Activated T-helper 1 cell treated with anti-CD3 and anti-CD28 coated beads, Interleukin-12 subunit alpha, Interleukin-12 subunit beta, Interleukin-2, Interleukin-4 antibody, amounts not matched to agents 30 ng/mL and 10 ng/mL and 1 ng/mL, durations not matched to agents 14 hours and 24 hours and 36 hours (primary cell): ENCODE measurements at regions of chr7 and their contacts with region 1.

Region 1: GRCh38 chr7:19144661-19145433 is at the start of gene FERD3L:
- DNase-seq: no peak
- H3K4me3 Mint-ChIP-seq: no peak within 1 kb of the TSS
- H3K27ac Mint-ChIP-seq: no peak within 1 kb of the TSS
- H3K4me1 Mint-ChIP-seq: no peaks in the 10 kb centered on the region
- H3K27me3 Mint-ChIP-seq: peaks cover 21% of the 10 kb centered on the region
- total RNA-seq, gene FERD3L: not detected in 2 replicates

Region 2: GRCh38 chr7:19107356-19108146 is 37.3 kb before region 1 on chr7:
- intact Hi-C with region 1: loop called (anchors 2 kb)
- DNase-seq: no peak
- H3K4me3 Mint-ChIP-seq: no peak overlapping the region
- H3K27ac Mint-ChIP-seq: peak overlapping the region; percentile 4
- H3K4me1 Mint-ChIP-seq: no peaks in the 10 kb centered on the region
- H3K27me3 Mint-ChIP-seq: peaks cover 78% of the 10 kb centered on the region